Posterior vena cava (tissue), 2 donors: ENCODE measurements at regions of chr15 and their contacts with region 1.

Region 1: DNA sequence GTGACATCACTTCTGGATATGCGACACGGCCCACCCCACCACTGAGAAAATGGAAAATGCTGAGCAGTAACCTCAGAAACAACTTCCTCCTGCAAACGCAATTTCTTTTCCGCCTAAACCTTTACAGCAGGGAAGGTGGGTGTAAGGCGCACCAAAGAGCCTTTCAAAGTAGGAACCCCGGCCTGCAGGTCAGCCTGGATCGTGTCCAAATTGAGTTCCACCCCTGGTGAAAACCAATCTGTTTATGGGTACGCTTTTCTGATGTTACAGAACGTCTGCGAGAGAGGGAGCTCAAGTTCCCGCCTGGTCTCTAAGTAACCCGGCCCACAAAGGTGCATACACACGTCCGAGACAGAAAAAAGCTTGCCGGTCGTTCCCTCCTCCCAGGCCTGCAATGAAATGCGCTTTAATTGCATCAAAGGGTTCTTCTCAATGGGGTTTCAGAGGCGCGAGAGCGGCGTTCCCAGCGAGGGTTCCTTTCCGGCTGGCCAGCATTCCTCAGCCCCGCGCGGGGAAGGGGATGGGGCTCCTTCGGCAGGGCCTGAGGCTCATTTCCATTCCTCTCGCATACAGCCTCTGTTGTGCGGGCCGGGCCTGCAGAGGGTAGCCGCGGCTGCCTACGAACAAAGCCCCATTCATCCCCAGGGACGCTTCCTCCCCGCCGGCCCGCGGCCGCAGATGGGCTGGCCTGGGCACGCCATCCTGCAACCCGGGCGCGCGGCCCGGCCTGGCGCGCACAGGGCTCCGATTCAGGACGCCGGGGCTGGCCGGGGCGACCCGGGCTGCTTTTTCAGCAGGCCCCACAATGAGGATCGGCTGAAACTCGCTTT is 138.1 kb downstream of the TMCO5A start:
- DNase-seq: peak; percentile 89

Region 2: DNA sequence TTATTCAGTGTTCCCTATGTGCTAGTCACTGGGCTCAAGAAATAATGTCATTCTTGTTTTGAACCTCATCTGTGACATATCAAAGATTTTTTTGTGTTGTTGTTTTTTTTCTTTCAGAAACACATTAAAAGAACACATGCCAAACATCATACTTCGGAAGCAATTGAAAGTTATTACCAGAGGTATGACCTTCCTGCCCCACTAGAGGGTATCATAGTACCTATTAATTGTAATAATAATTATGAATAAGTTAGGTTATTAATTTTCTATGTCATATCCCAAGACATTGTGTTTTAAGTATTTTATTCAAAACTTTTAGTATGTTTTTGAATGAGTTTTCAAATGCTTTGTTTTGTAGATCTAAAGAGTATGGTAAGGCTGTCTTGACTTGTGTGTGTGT is 1427.5 kb before region 1 on chr15:
- intact Hi-C with region 1: no loop called
- DNase-seq: no peak

Region 3: DNA sequence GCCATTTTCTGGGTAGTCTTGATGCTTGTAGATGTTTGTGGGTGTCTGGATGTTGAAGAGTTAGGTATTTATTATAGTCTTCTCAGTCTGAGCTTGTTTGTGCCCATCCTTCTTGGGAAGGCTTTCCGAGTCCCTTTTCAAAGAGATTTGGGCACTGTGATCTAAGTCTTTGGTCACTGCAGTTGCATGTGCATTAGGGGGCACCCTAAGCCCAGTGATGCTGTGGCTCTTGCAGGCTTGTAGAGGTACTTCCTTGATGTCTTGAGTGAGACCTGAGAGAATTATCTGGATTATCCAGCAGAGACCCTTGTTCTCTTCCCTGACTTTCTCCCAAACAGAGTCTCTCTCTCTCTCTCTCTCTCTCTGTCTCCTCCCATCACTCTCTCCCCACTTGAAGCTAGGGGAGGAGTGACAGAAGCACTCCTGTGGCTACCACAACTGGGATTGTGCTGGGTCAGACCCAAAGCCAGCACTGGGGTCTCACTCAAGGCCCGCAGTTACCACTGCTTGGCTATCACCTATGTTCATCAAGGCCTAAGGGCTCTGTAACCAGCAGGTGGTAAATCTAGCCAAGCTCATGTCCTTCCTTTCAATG is 69.6 kb before region 1 on chr15:
- intact Hi-C with region 1: no loop called
- DNase-seq: peak; percentile 81

Region 4: GRCh38 chr15:38252481-38253412 is 180.2 kb after region 1 on chr15 and contains the start of gene SPRED1:
- intact Hi-C with region 1: loop called in 1 of 2 experiments (anchors 10 kb)
- DNase-seq: peak; percentile 91
- total RNA-seq, gene SPRED1: 30.8 to 35.1 TPM